AG04450 (cell line): ENCODE measurements at regions of chr15 and their contacts with region 1.

Region 1: DNA sequence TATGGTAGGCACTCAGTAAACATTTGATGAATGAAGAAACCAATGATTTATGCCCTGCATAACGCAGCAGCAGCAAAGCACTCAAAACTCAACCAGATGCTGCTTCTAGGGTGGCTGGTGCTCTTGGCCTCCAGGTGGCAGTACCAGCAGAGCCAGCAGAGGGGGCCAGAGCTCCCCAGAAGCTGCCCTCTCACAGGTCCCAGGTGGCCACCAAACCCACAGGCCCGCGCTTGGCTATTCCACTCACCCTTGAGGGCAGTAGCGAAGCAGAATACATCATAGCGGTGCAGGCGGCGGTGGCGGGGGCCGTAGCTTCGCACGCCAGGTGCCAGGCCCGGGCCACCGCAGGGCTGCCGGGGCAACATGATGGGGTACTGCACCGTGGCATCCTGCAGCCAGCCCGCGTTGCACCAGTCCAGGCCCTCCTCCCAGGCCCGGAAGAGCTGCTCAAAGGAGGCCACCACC is 16.6 kb downstream of the HAPLN3 start:
- DNase-seq: no peak
- H3K4me3 ChIP-seq: no peak overlapping the region
- H3K27ac ChIP-seq: no peak overlapping the region
- H3K27me3 ChIP-seq: peaks cover 1% of the 10 kb centered on the region
- CTCF ChIP-seq: peak; percentile 81

Region 2: GRCh38 chr15:88865498-88866099 is 13.2 kb before region 1 on chr15:
- CTCF ChIA-PET with region 1: interaction called, 14 read pairs
- POLR2A ChIA-PET with region 1: no interaction called
- DNase-seq: no peak
- H3K4me3 ChIP-seq: no peak overlapping the region
- H3K27ac ChIP-seq: no peak overlapping the region
- H3K27me3 ChIP-seq: peaks cover 25% of the 10 kb centered on the region
- CTCF ChIP-seq: no peak

Region 3: GRCh38 chr15:88897456-88898194 is 18.9 kb after region 1 on chr15:
- CTCF ChIA-PET with region 1: interaction called, 11 read pairs
- POLR2A ChIA-PET with region 1: interaction called, 3 read pairs
- DNase-seq: no peak
- H3K4me3 ChIP-seq: no peak overlapping the region
- H3K27ac ChIP-seq: peak overlapping the region; percentile 1
- H3K27me3 ChIP-seq: no peaks in the 10 kb centered on the region
- CTCF ChIP-seq: peak; percentile 76

Region 4: GRCh38 chr15:88995449-88995848 is 116.7 kb after region 1 on chr15:
- CTCF ChIA-PET with region 1: no interaction called
- POLR2A ChIA-PET with region 1: no interaction called
- DNase-seq: no peak
- H3K4me3 ChIP-seq: no peak overlapping the region
- H3K27ac ChIP-seq: no peak overlapping the region
- H3K27me3 ChIP-seq: no peaks in the 10 kb centered on the region
- CTCF ChIP-seq: no peak